RWPE1 (cell line): ENCODE measurements at regions of chr1 and their contacts with region 1.

Region 1: DNA sequence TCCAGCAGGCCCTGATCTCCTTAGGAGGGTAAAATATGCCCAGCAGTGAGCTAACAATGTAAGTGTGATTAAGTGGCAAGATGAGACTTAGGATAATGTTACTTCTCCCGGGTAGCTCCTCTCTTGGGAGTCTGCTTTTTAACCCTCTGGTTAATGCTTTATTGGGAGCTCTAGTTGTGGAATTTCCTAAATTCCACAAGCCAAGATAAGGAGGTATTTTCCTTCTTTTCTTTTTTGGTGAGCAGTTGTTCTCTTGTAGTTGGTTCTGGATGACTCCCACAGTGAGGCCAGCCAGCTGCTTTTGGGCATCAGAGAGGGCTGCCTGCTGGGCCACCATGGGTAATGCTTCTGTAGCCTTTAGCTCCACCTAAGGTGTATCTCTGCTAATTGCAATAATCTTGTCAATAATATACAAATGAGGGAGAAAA is 19.3 kb downstream of the C1orf52 start:
- DNase-seq: peak; percentile 38
- H3K27ac ChIP-seq: no peak overlapping the region
- CTCF ChIP-seq: no peak

Region 2: GRCh38 chr1:84944767-84945486 is 295.3 kb before region 1 on chr1:
- CTCF ChIA-PET with region 1: interaction called, 12 read pairs
- POLR2A ChIA-PET with region 1: no interaction called
- DNase-seq: peak; percentile 74
- H3K27ac ChIP-seq: no peak overlapping the region
- CTCF ChIP-seq: peak; percentile 94

Region 3: GRCh38 chr1:85109475-85109874 is 130.7 kb before region 1 on chr1:
- CTCF ChIA-PET with region 1: interaction called, 21 read pairs
- POLR2A ChIA-PET with region 1: no interaction called
- DNase-seq: peak; percentile 71
- H3K27ac ChIP-seq: no peak overlapping the region
- CTCF ChIP-seq: peak; percentile 49

Region 4: GRCh38 chr1:85134576-85135395 is 105.4 kb before region 1 on chr1:
- CTCF ChIA-PET with region 1: no interaction called
- POLR2A ChIA-PET with region 1: no interaction called
- DNase-seq: no peak
- H3K27ac ChIP-seq: no peak overlapping the region
- CTCF ChIP-seq: no peak